Gastrocnemius medialis (tissue), 4 donors: ENCODE measurements at regions of chr9 and their contacts with region 1.

Region 1: GRCh38 chr9:111896353-111896958 is at the start of gene UGCG:
- DNase-seq: peak; percentile 74 to 81
- ATAC-seq: peak; percentile 87 to 91
- H3K4me3 ChIP-seq: peak within 1 kb of the TSS; percentile 73 to 93 (median 88)
- H3K27ac ChIP-seq: peak within 1 kb of the TSS; percentile 88 to 96 (median 92)
- H3K4me1 ChIP-seq: peaks cover 37 to 42% of the 10 kb centered on the region in 2 donors
- H3K27me3 ChIP-seq: no peaks in the 10 kb centered on the region
- CTCF ChIP-seq: no peak
- POLR2A ChIP-seq: peak; percentile 96 to 97
- total RNA-seq, gene UGCG: 9.1 to 18.5 (median 12.1) TPM

Region 2: GRCh38 chr9:111621895-111622480 is 274.5 kb before region 1 on chr9:
- in situ Hi-C with region 1: no loop called
- intact Hi-C with region 1: no loop called
- DNase-seq: peak in 1 of 2 donors; percentile 17
- ATAC-seq: peak in 1 of 2 donors; percentile 55
- H3K4me3 ChIP-seq: no peak overlapping the region
- H3K27ac ChIP-seq: no peak overlapping the region
- H3K4me1 ChIP-seq: no peaks in the 10 kb centered on the region
- H3K27me3 ChIP-seq: no peaks in the 10 kb centered on the region
- CTCF ChIP-seq: peak; percentile 43 to 92 (median 56)
- POLR2A ChIP-seq: no peak

Region 3: GRCh38 chr9:111866976-111867375 is 29.5 kb before region 1 on chr9:
- in situ Hi-C with region 1: no loop called
- intact Hi-C with region 1: no loop called
- DNase-seq: no peak
- ATAC-seq: no peak
- H3K4me3 ChIP-seq: no peak overlapping the region
- H3K27ac ChIP-seq: no peak overlapping the region
- H3K4me1 ChIP-seq: no peaks in the 10 kb centered on the region
- H3K27me3 ChIP-seq: no peaks in the 10 kb centered on the region
- CTCF ChIP-seq: no peak
- POLR2A ChIP-seq: no peak

Region 4: GRCh38 chr9:111957856-111958652 is 61.6 kb after region 1 on chr9:
- in situ Hi-C with region 1: no loop called
- intact Hi-C with region 1: loop called (anchors 2 kb)
- DNase-seq: no peak
- ATAC-seq: peak; percentile 75 to 81
- H3K4me3 ChIP-seq: peak overlapping the region in 1 of 4 donors; percentile 24
- H3K27ac ChIP-seq: peak overlapping the region; percentile 27 to 73 (median 50)
- H3K4me1 ChIP-seq: peaks cover 12 to 19% of the 10 kb centered on the region in 2 donors
- H3K27me3 ChIP-seq: no peaks in the 10 kb centered on the region
- CTCF ChIP-seq: no peak
- POLR2A ChIP-seq: no peak

Region 5: GRCh38 chr9:112308588-112308987 is 412.1 kb after region 1 on chr9:
- in situ Hi-C with region 1: loop called in 1 of 4 experiments (anchors 25 kb)
- intact Hi-C with region 1: no loop called
- DNase-seq: no peak
- ATAC-seq: no peak
- H3K4me3 ChIP-seq: no peak overlapping the region
- H3K27ac ChIP-seq: no peak overlapping the region
- H3K4me1 ChIP-seq: no peaks in the 10 kb centered on the region
- H3K27me3 ChIP-seq: no peaks in the 10 kb centered on the region
- CTCF ChIP-seq: no peak
- POLR2A ChIP-seq: no peak

Region 6: GRCh38 chr9:112333639-112334431 is 437.4 kb after region 1 on chr9:
- in situ Hi-C with region 1: no loop called
- intact Hi-C with region 1: loop called (anchors 1 kb)
- DNase-seq: peak; percentile 84 to 91
- ATAC-seq: peak; percentile 89
- H3K4me3 ChIP-seq: peak overlapping the region; percentile 67 to 96 (median 88)
- H3K27ac ChIP-seq: peak overlapping the region; percentile 84 to 99 (median 97)
- H3K4me1 ChIP-seq: peaks cover 9 to 16% of the 10 kb centered on the region in 2 donors
- H3K27me3 ChIP-seq: no peaks in the 10 kb centered on the region
- CTCF ChIP-seq: peak; percentile 45 to 78 (median 57)
- POLR2A ChIP-seq: no peak

Region 7: GRCh38 chr9:112361601-112362000 is 465.1 kb after region 1 on chr9:
- in situ Hi-C with region 1: loop called in 2 of 4 experiments (anchors 25 kb)
- intact Hi-C with region 1: no loop called
- DNase-seq: no peak
- ATAC-seq: peak in 1 of 2 donors; percentile 26
- H3K4me3 ChIP-seq: no peak overlapping the region
- H3K27ac ChIP-seq: no peak overlapping the region
- H3K4me1 ChIP-seq: no peaks in the 10 kb centered on the region
- H3K27me3 ChIP-seq: no peaks in the 10 kb centered on the region
- CTCF ChIP-seq: peak; percentile 48 to 65 (median 59)
- POLR2A ChIP-seq: no peak